Heart right ventricle (tissue), 16 donors: ENCODE measurements at regions of chr1 and their contacts with region 1.

Region 1: DNA sequence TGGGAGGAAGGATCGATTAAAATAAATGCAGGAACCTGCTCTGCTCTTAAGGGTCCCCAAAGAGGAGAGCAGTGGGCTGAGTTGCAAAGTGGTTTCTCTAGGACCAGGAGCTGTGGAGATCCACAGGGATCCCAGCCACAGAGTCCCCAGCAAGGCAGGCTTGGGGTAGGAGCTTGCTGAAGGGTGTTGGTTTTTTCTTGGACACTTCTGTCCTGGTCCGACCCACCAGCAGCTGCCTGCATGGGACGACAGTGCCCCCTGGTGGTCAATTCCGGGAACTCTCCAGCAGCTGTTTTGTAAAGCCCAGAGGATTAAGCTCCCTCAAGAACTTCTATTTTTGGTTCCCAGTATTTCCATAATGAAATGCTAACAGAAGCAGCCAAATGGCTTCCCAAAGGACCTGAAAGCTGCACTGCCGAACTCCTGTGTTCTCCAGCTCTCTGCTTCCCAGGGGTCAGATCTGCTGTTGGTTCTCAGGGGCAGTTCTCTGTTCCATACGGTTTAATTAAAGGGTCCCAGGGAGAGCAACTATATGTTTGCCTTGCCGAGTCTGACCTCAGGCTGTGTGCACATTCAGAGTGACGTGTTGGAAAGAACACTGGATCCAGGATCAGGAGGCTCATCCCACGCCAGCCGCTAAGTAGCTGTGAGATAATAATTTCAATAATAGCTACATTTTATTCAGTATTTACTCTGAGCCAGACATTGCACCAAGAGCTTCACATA is 23.2 kb downstream of the NENF start:
- DNase-seq: peak; percentile 91
- ATAC-seq: peak; percentile 74 to 87 (median 80)
- H3K4me3 ChIP-seq: peak overlapping the region in 2 of 10 donors; percentile 18 to 25
- H3K27ac ChIP-seq: peak overlapping the region in 9 of 10 donors; percentile 11 to 79 (median 55)
- H3K4me1 ChIP-seq: peaks cover 22 to 43% (median 30%) of the 10 kb centered on the region in 9 donors
- H3K27me3 ChIP-seq: no peaks in the 10 kb centered on the region
- CTCF ChIP-seq: peak; percentile 94 to 100 (median 99)

Region 2: GRCh38 chr1:211680752-211681327 is 775.1 kb before region 1 on chr1:
- intact Hi-C with region 1: loop called in 6 of 10 experiments (anchors 5 to 10 kb)
- DNase-seq: peak; percentile 52
- ATAC-seq: peak; percentile 69 to 92 (median 89)
- H3K4me3 ChIP-seq: no peak overlapping the region
- H3K27ac ChIP-seq: no peak overlapping the region
- H3K4me1 ChIP-seq: peaks cover 0 to 10% (median 2%) of the 10 kb centered on the region in 9 donors
- H3K27me3 ChIP-seq: no peaks in the 10 kb centered on the region
- CTCF ChIP-seq: peak; percentile 41 to 78 (median 75)

Region 3: GRCh38 chr1:212035123-212035834 is 420.7 kb before region 1 on chr1 and contains the starts of genes DTL and INTS7:
- intact Hi-C with region 1: loop called in 1 of 10 experiments (anchors 10 kb)
- DNase-seq: peak; percentile 98 to 99
- ATAC-seq: peak; percentile 97 to 99 (median 98)
- H3K4me3 ChIP-seq: peak within 1 kb of the TSS; percentile 40 to 73 (median 62)
- H3K27ac ChIP-seq: peak within 1 kb of the TSS; percentile 15 to 91 (median 86)
- H3K4me1 ChIP-seq: peaks cover 2 to 62% (median 30%) of the 10 kb centered on the region in 9 donors
- H3K27me3 ChIP-seq: no peaks in the 10 kb centered on the region
- CTCF ChIP-seq: peak; percentile 83 to 99 (median 96)
- total RNA-seq, gene DTL: 0.18 to 3.0 (median 0.58) TPM
- total RNA-seq, gene INTS7: 6.6 to 11.6 (median 9.0) TPM

Region 4: DNA sequence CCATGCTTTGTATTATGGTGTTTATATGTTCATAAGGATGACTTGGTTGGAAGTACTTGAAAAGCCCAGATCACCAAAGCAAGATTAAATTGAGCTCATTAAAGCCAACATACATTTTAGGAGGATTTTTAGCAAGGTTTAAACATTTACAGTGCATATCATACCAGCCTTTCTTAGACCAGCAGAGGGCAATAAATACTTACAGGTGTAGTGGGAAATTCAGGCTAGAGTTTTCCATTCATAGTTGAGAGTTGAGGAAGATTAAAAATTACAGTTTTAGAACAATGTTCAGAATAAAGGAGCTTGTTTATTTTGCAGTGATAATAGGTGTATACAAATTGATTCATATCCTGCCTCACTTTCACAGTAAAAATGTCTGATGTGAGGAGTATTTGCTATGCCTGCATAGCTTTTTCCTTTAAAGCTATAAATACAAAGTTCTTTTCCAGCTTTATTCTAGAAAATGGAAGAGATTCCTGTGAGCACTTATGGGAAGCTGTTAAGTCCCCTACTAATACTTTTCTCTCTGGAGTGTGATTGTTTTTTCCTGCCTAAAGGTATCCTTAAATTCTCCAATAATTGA is 385.2 kb before region 1 on chr1:
- intact Hi-C with region 1: loop called in 7 of 10 experiments (anchors 1 to 5 kb)
- DNase-seq: no peak
- ATAC-seq: peak; percentile 52 to 83 (median 58)
- H3K4me3 ChIP-seq: no peak overlapping the region
- H3K27ac ChIP-seq: peak overlapping the region in 2 of 10 donors; percentile 0 to 58
- H3K4me1 ChIP-seq: peaks cover 0 to 39% (median 9%) of the 10 kb centered on the region in 9 donors
- H3K27me3 ChIP-seq: no peaks in the 10 kb centered on the region
- CTCF ChIP-seq: peak; percentile 66 to 91 (median 81)

Region 5: GRCh38 chr1:212291505-212292134 is 164.3 kb before region 1 on chr1:
- intact Hi-C with region 1: loop called in 6 of 10 experiments (anchors 5 to 10 kb)
- DNase-seq: no peak
- ATAC-seq: peak; percentile 56 to 82 (median 74)
- H3K4me3 ChIP-seq: peak overlapping the region in 1 of 10 donors; percentile 9
- H3K27ac ChIP-seq: peak overlapping the region in 4 of 10 donors; percentile 4 to 98 (median 9)
- H3K4me1 ChIP-seq: peaks cover 0 to 100% (median 80%) of the 10 kb centered on the region in 9 donors
- H3K27me3 ChIP-seq: no peaks in the 10 kb centered on the region
- CTCF ChIP-seq: peak in 7 of 9 donors; percentile 54 to 78 (median 68)

Region 6: DNA sequence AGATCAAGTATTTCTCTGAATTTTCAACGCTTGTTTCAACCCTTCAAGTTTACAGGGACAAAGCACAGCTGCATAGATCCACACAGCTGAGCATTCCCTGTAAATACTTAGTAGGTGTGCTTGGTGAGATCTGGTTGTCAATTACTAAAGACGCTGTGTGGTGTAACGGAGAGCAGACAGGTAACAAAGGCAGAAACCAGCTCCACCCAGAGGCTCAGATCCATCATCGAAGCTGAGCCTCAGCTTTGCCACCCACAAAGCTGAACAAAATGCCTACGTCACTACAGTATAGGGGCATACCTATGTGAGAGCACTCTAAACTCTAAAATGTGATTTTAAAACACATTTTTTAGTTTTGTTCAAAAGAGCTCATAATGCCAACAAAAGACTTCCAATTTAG is 80.0 kb before region 1 on chr1:
- intact Hi-C with region 1: loop called in 3 of 10 experiments (anchors 5 to 10 kb)
- DNase-seq: no peak
- ATAC-seq: no peak
- H3K4me3 ChIP-seq: no peak overlapping the region
- H3K27ac ChIP-seq: no peak overlapping the region
- H3K4me1 ChIP-seq: no peaks in the 10 kb centered on the region
- H3K27me3 ChIP-seq: no peaks in the 10 kb centered on the region
- CTCF ChIP-seq: no peak